Activated naive CD4-positive, alpha-beta T cell treated with anti-CD3 and anti-CD28 coated beads, Interleukin-2, amount 10 ng/mL, durations not matched to agents 7 days and 5 days (primary cell): ENCODE measurements at regions of chr12 and their contacts with region 1.

Region 1: GRCh38 chr12:120466560-120467315 is 2.8 kb downstream of the SRSF9 start:
- DNase-seq: peak; percentile 66
- H3K4me3 Mint-ChIP-seq: no peak overlapping the region
- H3K27ac Mint-ChIP-seq: peak overlapping the region; percentile 19
- H3K4me1 Mint-ChIP-seq: peaks cover 39% of the 10 kb centered on the region
- H3K27me3 Mint-ChIP-seq: no peaks in the 10 kb centered on the region

Region 2: GRCh38 chr12:120439646-120440247 is 27.0 kb before region 1 on chr12:
- CTCF ChIA-PET with region 1: interaction called, 13 read pairs
- DNase-seq: peak; percentile 82
- H3K4me3 Mint-ChIP-seq: peak overlapping the region; percentile 43
- H3K27ac Mint-ChIP-seq: peak overlapping the region; percentile 52
- H3K4me1 Mint-ChIP-seq: peaks cover 45% of the 10 kb centered on the region
- H3K27me3 Mint-ChIP-seq: no peaks in the 10 kb centered on the region

Region 3: GRCh38 chr12:120447992-120448391 is 18.7 kb before region 1 on chr12:
- CTCF ChIA-PET with region 1: interaction called, 19 read pairs
- DNase-seq: no peak
- H3K4me3 Mint-ChIP-seq: peak overlapping the region; percentile 92
- H3K27ac Mint-ChIP-seq: peak overlapping the region; percentile 72
- H3K4me1 Mint-ChIP-seq: peaks cover 40% of the 10 kb centered on the region
- H3K27me3 Mint-ChIP-seq: peaks cover 5% of the 10 kb centered on the region

Region 4: DNA sequence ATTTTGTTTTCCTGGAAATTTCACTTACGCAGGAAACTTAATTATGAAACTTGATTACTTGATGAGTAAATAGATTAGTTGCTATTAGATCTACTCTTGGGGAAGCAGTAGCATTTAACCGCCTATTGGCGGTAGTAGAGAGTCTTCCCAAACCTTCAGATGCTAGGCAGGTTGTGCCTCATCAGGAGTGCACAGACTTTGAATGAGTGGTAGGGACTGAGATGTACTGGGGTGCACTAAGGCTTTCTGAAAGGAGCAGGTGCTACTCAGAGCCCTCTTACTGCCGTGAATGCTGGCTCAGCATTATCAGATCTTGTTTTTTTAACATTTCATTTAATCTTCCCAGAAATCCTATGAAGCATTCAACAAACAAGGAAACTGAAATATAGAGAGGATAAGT is 12.8 kb before region 1 on chr12:
- CTCF ChIA-PET with region 1: interaction called, 19 read pairs
- DNase-seq: peak; percentile 35
- H3K4me3 Mint-ChIP-seq: no peak overlapping the region
- H3K27ac Mint-ChIP-seq: no peak overlapping the region
- H3K4me1 Mint-ChIP-seq: peaks cover 6% of the 10 kb centered on the region
- H3K27me3 Mint-ChIP-seq: no peaks in the 10 kb centered on the region

Region 5: GRCh38 chr12:120847814-120848213 is 381.1 kb after region 1 on chr12:
- CTCF ChIA-PET with region 1: no interaction called
- DNase-seq: no peak
- H3K4me3 Mint-ChIP-seq: no peak overlapping the region
- H3K27ac Mint-ChIP-seq: no peak overlapping the region
- H3K4me1 Mint-ChIP-seq: peaks cover 16% of the 10 kb centered on the region
- H3K27me3 Mint-ChIP-seq: no peaks in the 10 kb centered on the region

Region 6: GRCh38 chr12:120858306-120859088 is 391.8 kb after region 1 on chr12:
- CTCF ChIA-PET with region 1: no interaction called
- DNase-seq: no peak
- H3K4me3 Mint-ChIP-seq: no peak overlapping the region
- H3K27ac Mint-ChIP-seq: no peak overlapping the region
- H3K4me1 Mint-ChIP-seq: peaks cover 35% of the 10 kb centered on the region
- H3K27me3 Mint-ChIP-seq: no peaks in the 10 kb centered on the region